ENCODE measurements at regions of chr2 and their contacts with region 1.

Region 1: GRCh38 chr2:36966370-36967235 is at the start of gene STRN:
- DNase-seq: peak; percentile 99
- H3K4me3 Mint-ChIP-seq: peak within 1 kb of the TSS; percentile 95
- H3K27ac Mint-ChIP-seq: peak within 1 kb of the TSS; percentile 98
- H3K4me1 Mint-ChIP-seq: peaks cover 61% of the 10 kb centered on the region
- H3K27me3 Mint-ChIP-seq: no peaks in the 10 kb centered on the region
- total RNA-seq, gene STRN: 28.8 and 29.0 TPM in 2 replicates

Region 2: DNA sequence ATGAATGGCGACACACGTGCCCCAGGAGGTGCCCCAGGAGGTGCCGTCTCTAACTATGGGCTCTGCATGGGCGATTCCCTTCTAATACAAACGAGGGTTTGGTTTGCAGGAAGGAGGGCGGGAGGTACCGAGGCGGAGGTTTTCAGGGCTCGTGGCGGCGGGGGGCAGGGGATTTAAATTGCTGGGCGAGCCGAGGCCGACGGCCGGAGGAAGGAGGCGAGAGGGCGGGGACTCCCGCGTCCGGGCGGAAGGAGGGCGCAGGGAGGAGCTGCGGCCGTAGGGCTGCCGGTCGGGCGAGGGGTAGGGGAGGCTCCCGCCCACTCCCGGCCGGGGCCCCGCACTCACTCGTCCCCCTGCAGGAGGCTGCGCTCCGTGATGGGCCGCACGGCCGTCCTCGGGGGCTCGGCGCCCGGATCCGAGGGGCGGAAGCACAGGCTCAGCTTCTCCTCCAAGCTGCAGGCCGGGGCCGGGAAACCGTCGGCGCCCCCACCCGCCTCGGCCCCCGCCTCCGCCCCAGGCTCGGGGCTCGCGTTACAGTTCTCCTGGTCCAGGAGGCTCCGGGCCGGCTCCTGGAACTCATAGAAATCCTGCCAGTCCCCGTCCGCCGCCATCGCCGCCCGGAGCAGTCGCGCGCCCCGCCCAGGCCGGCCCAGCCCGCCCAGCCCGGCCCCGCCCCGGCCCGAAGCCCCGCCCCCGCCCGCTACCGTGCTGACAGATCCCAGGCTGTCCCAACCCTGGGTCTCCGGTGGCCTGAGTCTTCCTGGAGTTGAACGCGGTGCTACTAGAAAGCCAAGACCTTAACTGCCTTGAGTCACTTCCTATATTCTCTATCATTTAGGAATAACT is 368.8 kb before region 1 on chr2 and contains the start of gene FEZ2:
- intact Hi-C with region 1: loop called (anchors 5 kb)
- DNase-seq: peak; percentile 73
- H3K4me3 Mint-ChIP-seq: peak within 1 kb of the TSS; percentile 93
- H3K27ac Mint-ChIP-seq: peak within 1 kb of the TSS; percentile 89
- H3K4me1 Mint-ChIP-seq: peaks cover 29% of the 10 kb centered on the region
- H3K27me3 Mint-ChIP-seq: peaks cover 5% of the 10 kb centered on the region
- total RNA-seq, gene FEZ2: 14.0 and 14.9 TPM in 2 replicates

Region 3: DNA sequence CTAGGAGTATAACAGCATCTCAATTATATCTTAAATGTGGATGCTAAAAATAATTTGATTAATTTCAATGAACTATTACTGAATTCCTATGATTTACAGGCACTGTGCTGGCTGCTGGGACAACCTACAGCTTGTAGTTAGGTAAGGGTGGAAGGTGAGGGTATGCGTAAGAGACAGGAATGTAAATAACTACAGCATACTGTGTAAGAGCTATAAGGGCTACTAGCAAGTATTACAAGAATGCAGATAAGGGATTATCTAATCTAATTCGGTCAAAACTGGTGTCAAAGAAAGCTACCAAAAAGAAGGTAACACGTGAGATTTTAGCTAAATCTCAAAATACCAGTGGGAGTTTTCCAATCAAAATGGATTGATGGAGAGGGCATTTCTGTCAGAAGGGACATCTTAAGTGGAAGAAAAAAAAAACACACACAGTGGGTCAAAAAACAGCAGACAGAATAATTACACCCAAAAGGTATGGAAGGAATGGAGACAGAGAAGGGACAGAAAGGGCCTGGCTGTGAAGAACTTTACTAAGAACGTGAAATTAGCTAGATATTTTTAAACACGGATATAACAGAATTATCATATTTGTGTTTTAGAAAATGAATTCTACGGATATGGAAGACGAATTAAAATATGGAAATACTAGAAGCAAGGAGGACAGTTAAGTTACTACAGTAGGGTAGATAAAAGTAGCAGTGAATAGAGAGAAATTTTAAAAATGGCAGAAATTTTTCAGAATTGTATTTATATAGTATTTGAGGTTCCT is 47.4 kb before region 1 on chr2:
- intact Hi-C with region 1: loop called (anchors 2 kb)
- DNase-seq: no peak
- H3K4me3 Mint-ChIP-seq: no peak overlapping the region
- H3K27ac Mint-ChIP-seq: no peak overlapping the region
- H3K4me1 Mint-ChIP-seq: peaks cover 15% of the 10 kb centered on the region
- H3K27me3 Mint-ChIP-seq: no peaks in the 10 kb centered on the region

Region 4: DNA sequence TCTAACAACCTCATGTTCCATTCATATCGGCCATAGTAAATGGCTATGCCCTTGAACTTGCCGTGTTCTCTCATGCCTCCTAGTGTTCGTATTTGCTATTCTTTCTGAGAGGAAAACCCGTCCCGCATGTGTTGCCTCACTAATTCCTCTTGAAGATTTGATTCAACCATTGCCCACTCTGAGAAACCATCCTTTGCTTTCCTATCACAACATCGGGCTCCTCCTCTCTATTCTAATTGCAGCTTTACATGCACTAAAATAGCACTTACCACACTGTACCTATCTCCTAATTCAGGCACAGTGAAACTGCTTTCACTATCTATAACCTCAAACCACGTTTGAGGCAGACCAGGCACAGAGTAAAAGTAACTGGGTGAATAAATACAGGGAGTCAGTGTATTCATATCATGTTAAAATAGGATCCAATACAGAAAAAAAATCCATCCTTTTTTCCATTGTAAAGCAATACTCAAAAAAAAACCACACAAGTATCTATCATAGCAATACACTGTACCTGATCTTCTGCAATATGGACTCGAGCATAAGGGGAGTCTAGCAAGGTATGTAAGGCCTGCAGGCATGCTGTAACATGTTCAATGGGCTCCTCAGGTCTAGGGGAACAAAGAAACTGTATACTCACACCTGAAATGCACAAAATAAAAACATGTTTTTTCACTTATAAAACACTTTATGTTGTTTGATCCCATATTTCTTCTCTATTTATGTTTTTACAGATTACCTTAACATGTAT is 38.7 kb after region 1 on chr2:
- intact Hi-C with region 1: loop called (anchors 1 kb)
- DNase-seq: peak; percentile 5
- H3K4me3 Mint-ChIP-seq: peak overlapping the region; percentile 34
- H3K27ac Mint-ChIP-seq: no peak overlapping the region
- H3K4me1 Mint-ChIP-seq: peaks cover 11% of the 10 kb centered on the region
- H3K27me3 Mint-ChIP-seq: no peaks in the 10 kb centered on the region

Region 5: DNA sequence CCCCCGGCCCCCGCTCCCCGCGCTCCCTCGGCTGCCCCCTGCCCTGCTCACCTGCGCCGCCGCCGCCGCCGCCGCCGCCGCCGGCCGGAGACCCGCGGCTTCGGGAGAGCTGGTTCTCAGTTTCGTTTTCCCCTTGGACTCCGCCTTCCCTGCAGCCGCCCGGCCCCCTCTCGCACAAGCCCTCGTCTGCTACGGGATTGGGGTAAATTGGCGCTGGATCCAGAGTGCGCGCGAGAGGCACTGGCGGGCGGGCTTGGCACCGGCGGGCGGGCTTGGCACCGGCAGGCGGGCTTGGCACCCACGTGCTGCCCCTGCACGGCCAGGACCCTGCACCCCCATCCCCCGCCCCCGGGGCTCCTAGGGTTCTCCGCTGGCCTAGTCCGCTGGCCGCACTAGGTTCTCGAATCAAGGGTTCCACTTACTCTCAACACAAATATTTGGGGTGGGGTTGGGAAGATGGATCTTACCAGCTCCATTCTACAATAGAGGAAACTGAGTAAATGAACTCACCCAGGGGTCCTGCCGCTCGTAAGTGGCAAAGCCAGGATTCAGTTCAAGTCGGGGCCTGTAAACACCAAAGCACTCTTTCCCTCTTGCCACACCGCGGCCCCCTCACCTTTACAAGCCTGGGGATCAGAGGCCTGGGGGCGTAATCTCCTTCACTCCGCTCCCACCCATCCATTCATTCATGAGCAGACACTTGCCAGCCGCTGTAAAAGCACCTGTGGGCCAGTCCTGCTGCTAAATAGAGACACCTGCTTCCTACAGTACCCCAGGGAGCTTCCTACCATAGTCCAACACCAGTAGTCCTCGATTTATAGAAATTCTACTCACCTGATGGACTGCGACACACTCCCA is 190.5 kb after region 1 on chr2 and contains the start of gene EIF2AK2:
- intact Hi-C with region 1: loop called (anchors 5 kb)
- DNase-seq: peak; percentile 84
- H3K4me3 Mint-ChIP-seq: peak within 1 kb of the TSS; percentile 89
- H3K27ac Mint-ChIP-seq: peak within 1 kb of the TSS; percentile 93
- H3K4me1 Mint-ChIP-seq: peaks cover 46% of the 10 kb centered on the region
- H3K27me3 Mint-ChIP-seq: no peaks in the 10 kb centered on the region
- total RNA-seq, gene EIF2AK2: 40.5 and 41.9 TPM in 2 replicates

Region 6: DNA sequence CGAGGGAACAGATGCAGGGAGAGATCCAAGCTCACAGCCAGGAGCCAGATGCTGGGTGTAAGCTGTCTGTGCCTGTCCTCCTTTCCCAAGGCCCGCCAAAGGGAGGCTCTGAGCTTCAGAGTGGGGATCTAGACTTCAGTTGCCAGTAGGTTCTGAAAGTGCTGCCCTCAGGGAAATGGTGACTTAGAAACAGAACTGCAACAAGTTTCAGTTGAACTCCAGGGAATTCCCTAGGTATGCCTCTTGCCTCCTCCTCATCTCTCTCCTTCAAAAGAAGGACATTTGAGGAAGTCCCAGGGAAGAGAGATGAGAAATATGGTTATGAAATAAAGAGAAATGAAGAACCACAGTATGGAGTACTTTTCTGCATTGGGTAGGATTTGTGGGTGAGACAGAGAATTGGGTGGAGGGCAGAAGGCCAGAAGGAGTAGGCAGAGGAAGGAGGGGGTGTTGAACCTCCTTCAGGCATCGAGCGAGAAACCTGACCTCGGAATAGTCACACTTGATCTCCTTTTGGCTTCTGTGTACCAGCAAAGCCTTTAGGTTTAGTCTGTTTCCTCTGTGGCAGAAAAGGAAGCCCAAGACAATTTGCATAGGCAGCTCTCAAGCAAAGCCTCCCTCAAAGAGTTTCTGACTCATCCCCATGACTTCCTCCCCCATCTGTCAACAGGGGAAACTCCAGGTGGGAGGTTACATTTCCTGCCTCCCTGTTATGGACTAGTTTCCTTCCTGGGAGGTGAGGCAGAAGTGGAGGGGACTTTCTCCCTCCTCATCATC is 423.6 kb after region 1 on chr2:
- intact Hi-C with region 1: no loop called
- DNase-seq: peak; percentile 76
- H3K4me3 Mint-ChIP-seq: peak overlapping the region; percentile 8
- H3K27ac Mint-ChIP-seq: no peak overlapping the region
- H3K4me1 Mint-ChIP-seq: peaks cover 5% of the 10 kb centered on the region
- H3K27me3 Mint-ChIP-seq: peaks cover 15% of the 10 kb centered on the region

Measured in activated T-helper 1 cell treated with anti-CD3 and anti-CD28 coated beads, Interleukin-12 subunit alpha, Interleukin-12 subunit beta, Interleukin-2, Interleukin-4 antibody, amounts not matched to agents 30 ng/mL and 10 ng/mL and 1 ng/mL, durations not matched to agents 14 hours and 24 hours and 36 hours (primary cell).